Mammary epithelial cell (primary cell): ENCODE measurements at regions of chr15 and their contacts with region 1.

Region 1: GRCh38 chr15:98085003-98085639 is 124.6 kb downstream of the ARRDC4 start:
- DNase-seq: peak; percentile 51
- H3K4me3 ChIP-seq: no peak overlapping the region
- H3K27ac ChIP-seq: no peak overlapping the region
- H3K4me1 ChIP-seq: no peaks in the 10 kb centered on the region
- H3K27me3 ChIP-seq: no peaks in the 10 kb centered on the region
- CTCF ChIP-seq: peak; percentile 67 to 71

Region 2: DNA sequence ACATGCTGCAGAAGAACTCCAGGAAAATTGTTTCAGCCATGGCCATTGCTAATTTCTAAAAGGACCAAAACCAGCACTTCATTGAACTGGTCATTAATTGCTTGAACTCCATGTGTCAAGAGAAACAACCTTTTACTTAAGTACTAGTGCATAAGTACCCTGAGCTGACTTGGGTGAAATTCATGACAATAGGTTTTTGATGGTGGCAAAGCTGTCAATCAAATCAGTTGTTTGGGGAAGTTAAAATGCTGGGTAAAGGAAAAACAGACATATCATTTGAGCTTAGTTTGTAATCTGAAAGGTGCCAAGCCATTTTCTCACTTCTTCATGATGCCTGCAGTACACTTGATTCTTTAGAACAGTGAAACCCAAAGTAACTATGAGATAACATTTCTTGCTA is 532.6 kb before region 1 on chr15:
- CTCF ChIA-PET with region 1: no interaction called
- dilution Hi-C with region 1: no loop called
- in situ Hi-C with region 1: no loop called
- intact Hi-C with region 1: no loop called
- DNase-seq: no peak
- H3K4me3 ChIP-seq: no peak overlapping the region
- H3K27ac ChIP-seq: no peak overlapping the region
- H3K4me1 ChIP-seq: no peaks in the 10 kb centered on the region
- H3K27me3 ChIP-seq: no peaks in the 10 kb centered on the region
- CTCF ChIP-seq: no peak

Region 3: GRCh38 chr15:97903971-97904572 is 181.0 kb before region 1 on chr15:
- CTCF ChIA-PET with region 1: no interaction called
- dilution Hi-C with region 1: no loop called
- in situ Hi-C with region 1: loop called in 1 of 2 experiments (anchors 25 kb)
- intact Hi-C with region 1: loop called (anchors 1 kb)
- DNase-seq: peak; percentile 67
- H3K4me3 ChIP-seq: no peak overlapping the region
- H3K27ac ChIP-seq: no peak overlapping the region
- H3K4me1 ChIP-seq: peaks cover 20% of the 10 kb centered on the region
- H3K27me3 ChIP-seq: no peaks in the 10 kb centered on the region
- CTCF ChIP-seq: peak; percentile 85 to 93

Region 4: GRCh38 chr15:97909291-97909891 is 175.7 kb before region 1 on chr15:
- CTCF ChIA-PET with region 1: no interaction called
- dilution Hi-C with region 1: no loop called
- in situ Hi-C with region 1: loop called (anchors 5 to 25 kb)
- intact Hi-C with region 1: loop called (anchors 1 kb)
- DNase-seq: peak; percentile 45
- H3K4me3 ChIP-seq: no peak overlapping the region
- H3K27ac ChIP-seq: no peak overlapping the region
- H3K4me1 ChIP-seq: peaks cover 1% of the 10 kb centered on the region
- H3K27me3 ChIP-seq: no peaks in the 10 kb centered on the region
- CTCF ChIP-seq: peak; percentile 96 to 99

Region 5: DNA sequence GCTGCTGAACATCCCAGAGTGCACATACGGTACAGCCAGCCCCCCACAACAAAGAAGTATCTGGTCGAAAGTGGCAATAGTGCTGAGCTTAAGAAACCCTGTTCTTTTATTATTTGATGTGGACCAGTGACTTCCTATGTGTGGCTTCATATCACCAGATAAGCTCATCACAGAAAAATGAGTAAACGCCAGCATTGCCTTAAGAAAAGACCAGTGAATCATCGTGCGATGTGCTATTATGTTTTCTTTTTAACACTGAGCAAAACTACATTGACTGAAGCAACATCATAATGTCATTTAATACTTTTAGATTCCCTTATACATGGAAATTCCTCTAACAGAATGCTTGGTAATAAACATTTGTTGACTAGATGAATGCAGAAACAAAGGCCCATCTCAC is 169.9 kb before region 1 on chr15:
- CTCF ChIA-PET with region 1: no interaction called
- dilution Hi-C with region 1: no loop called
- in situ Hi-C with region 1: loop called (anchors 5 to 25 kb)
- intact Hi-C with region 1: no loop called
- DNase-seq: no peak
- H3K4me3 ChIP-seq: no peak overlapping the region
- H3K27ac ChIP-seq: no peak overlapping the region
- H3K4me1 ChIP-seq: no peaks in the 10 kb centered on the region
- H3K27me3 ChIP-seq: peaks cover 3% of the 10 kb centered on the region
- CTCF ChIP-seq: no peak

Region 6: DNA sequence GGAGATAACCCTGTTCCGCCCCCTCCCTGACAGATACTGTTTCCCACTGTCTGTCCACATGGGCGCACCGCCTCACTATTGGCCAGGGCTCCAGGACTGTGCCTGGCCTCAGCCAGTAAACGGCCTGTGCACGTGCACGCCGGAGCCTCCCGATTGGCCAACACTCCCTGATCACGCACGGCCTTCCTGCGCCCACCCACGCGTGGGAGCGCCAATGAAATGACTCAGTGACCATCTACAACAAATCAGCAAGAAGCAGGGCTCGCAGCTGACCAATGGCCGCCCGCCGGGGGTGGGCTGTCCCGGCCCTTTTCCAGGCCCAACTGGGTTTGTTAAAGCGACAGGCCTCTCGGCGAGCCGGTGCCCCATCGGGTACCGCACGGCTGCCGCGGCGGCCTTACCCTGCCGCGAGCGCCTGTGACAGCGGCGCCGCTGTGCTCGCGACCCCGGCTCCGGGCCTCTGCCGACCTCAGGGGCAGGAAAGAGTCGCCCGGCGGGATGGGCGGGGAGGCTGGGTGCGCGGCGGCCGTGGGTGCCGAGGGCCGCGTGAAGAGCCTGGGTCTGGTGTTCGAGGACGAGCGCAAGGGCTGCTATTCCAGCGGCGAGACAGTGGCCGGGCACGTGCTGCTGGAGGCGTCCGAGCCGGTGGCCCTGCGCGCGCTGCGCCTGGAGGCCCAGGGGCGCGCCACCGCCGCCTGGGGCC is 124.6 kb before region 1 on chr15 and contains the start of gene ARRDC4:
- CTCF ChIA-PET with region 1: no interaction called
- dilution Hi-C with region 1: no loop called
- in situ Hi-C with region 1: no loop called
- intact Hi-C with region 1: loop called (anchors 1 kb)
- DNase-seq: peak; percentile 100
- H3K4me3 ChIP-seq: peak within 1 kb of the TSS; percentile 68 to 85 (median 78)
- H3K27ac ChIP-seq: peak within 1 kb of the TSS; percentile 82
- H3K4me1 ChIP-seq: peaks cover 8% of the 10 kb centered on the region
- H3K27me3 ChIP-seq: no peaks in the 10 kb centered on the region
- CTCF ChIP-seq: no peak
- total RNA-seq, gene ARRDC4: 18.3 to 61.5 TPM

Region 7: DNA sequence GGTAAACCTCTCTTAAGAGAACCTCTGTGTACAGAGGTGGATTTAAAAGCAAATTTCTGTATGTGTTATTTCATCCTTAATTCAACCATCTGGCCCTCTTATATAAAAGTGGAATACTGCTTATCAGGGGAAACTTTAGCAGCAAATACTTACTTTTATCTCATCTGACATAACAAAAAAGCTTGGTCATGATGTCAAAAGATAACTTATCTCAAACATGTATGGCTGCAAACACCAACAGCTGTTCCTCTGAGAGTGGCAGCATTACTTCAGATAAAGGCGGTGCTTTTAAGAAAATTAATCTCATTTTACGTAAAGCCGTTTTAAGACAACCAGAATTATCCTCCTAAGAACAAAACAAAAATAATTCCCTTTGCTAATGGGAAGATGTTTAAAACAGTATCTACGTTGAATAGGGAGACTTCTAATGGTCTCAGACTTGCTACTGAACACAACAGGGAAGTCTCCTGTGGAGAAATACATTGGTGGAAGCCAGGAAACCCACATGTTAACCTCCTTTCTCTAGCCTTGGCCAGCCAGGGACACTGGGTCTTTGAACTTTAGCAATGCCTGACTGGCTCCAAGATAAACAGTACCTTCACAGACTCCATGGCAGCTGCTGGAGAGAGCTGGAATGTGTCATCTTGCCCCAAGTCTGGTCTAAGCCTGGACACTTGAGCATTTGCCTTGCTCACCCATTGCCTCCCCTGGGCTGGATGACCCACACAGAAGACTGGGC is 106.6 kb before region 1 on chr15:
- CTCF ChIA-PET with region 1: no interaction called
- dilution Hi-C with region 1: no loop called
- in situ Hi-C with region 1: no loop called
- intact Hi-C with region 1: loop called (anchors 5 kb)
- DNase-seq: no peak
- H3K4me3 ChIP-seq: no peak overlapping the region
- H3K27ac ChIP-seq: no peak overlapping the region
- H3K4me1 ChIP-seq: peaks cover 23% of the 10 kb centered on the region
- H3K27me3 ChIP-seq: no peaks in the 10 kb centered on the region
- CTCF ChIP-seq: no peak